Naive thymus-derived CD4-positive, alpha-beta T cell (primary cell): ENCODE measurements at regions of chr13 and their contacts with region 1.

Region 1: DNA sequence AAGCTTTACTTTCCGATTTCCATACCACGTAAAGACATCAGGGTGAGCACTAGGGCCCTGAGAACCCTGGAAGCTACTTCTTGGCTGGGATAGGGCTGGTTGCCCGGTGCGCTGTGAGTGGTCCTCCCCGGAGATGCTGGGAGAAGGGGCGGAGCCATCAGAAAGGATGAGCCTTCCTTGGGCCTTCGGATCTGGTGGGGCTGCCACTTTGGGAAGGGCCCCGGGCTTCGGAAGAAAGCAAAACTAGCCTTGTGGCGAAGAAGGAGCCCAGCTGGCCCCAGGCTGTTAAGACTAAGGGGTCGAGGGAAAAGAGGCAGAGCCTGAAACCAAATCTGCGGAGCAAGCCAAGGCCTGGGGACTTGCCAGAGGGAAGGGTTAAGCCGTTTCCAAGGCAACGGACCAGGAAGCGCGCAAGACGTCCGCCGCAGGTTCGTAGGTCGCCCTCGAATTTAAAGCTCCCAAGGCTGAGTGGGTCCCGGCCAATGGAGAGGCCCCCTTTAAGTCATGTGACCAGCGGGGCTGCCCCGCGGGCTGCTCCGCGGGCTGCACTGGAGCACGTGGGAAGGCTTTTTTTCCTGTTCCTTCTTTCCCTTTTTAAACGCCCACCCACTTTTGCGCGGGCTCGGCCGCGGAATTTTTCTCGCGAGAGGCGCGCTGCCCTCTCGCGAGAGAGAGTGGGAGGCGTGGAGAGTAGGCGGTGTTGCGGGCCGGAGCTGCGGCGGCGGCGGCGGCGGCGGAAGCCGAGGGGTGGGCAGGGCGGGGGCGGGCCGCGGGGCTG is 426 bp upstream of the AKAP11 start:
- DNase-seq: peak; percentile 87 to 96 (median 93)
- ATAC-seq: peak; percentile 93
- H3K4me3 ChIP-seq: peak overlapping the region; percentile 84
- H3K4me3 Mint-ChIP-seq: peak overlapping the region in 9 of 10 donors; percentile 84 to 98 (median 97)
- H3K27ac ChIP-seq: peak overlapping the region; percentile 93
- H3K27ac Mint-ChIP-seq: peak overlapping the region; percentile 75 to 98 (median 96)
- H3K4me1 ChIP-seq: peaks cover 21 to 22% of the 10 kb centered on the region in 2 donors
- H3K4me1 Mint-ChIP-seq: peaks cover 16 to 55% (median 47%) of the 10 kb centered on the region in 7 donors
- H3K27me3 ChIP-seq: no peaks in the 10 kb centered on the region
- H3K27me3 Mint-ChIP-seq: peaks cover 0 to 5% (median 0%) of the 10 kb centered on the region in 5 donors

Region 2: DNA sequence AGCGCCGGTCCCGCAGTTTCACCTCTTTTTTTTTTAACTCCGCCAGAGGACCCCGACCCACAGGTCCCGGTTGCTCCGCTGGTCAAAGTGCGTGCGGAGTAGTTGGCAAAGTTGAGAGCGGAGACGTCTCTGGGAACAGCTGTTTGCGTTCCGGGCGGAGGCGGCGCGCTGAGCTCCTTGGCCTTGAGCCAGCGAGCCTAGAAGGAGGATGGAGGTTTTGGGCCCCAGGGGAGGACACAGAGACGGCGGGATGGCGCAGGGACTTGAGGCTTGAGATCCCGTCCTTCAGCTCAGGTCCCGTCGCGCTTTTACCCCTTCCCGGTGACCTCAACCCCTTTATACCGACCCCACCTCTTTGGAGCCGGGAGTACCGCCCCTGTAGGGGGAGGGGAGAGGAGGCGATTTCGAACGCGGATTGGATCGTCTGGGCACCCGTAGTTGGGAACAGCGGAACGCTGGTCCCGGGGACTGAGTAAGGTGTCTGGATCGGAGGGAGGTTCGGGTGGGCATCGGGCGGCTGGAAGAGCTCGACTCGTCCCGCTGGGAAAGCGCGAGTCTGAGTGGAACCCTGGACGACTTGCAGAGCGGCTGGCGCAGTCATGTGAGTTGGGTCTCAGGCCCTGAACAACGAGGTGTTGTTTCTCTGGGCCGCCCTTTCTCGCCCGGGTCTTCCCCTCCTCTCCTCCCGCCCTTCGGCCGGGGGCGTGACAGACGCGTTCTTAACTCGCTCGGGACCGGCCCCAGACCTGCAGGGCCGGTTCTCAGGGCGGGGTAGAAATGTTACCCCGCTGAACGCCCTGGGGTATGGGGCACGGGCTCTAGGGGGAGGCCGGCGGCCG is 1210.2 kb before region 1 on chr13 and contains the start of gene WBP4:
- CTCF ChIA-PET with region 1: no interaction called
- POLR2A ChIA-PET with region 1: no interaction called
- intact Hi-C with region 1: loop called in 1 of 2 experiments (anchors 1 kb)
- DNase-seq: peak; percentile 81 to 94 (median 90)
- ATAC-seq: peak; percentile 78
- H3K4me3 ChIP-seq: peak within 1 kb of the TSS; percentile 74
- H3K4me3 Mint-ChIP-seq: peak within 1 kb of the TSS; percentile 97 to 100 (median 99)
- H3K27ac ChIP-seq: peak within 1 kb of the TSS; percentile 77
- H3K27ac Mint-ChIP-seq: peak within 1 kb of the TSS; percentile 95 to 100 (median 100)
- H3K4me1 ChIP-seq: peaks cover 0 to 5% of the 10 kb centered on the region in 2 donors
- H3K4me1 Mint-ChIP-seq: peaks cover 33 to 82% (median 59%) of the 10 kb centered on the region in 7 donors
- H3K27me3 ChIP-seq: no peaks in the 10 kb centered on the region
- H3K27me3 Mint-ChIP-seq: peaks cover 0 to 10% (median 0%) of the 10 kb centered on the region in 5 donors
- total RNA-seq, gene WBP4: 6.5 to 9.8 (median 8.6) TPM

Region 3: GRCh38 chr13:41310963-41311606 is 960.4 kb before region 1 on chr13 and contains the start of gene NAA16:
- CTCF ChIA-PET with region 1: no interaction called
- POLR2A ChIA-PET with region 1: no interaction called
- intact Hi-C with region 1: loop called in 1 of 2 experiments (anchors 2 kb)
- DNase-seq: peak; percentile 91 to 99 (median 94)
- ATAC-seq: peak; percentile 91
- H3K4me3 ChIP-seq: peak within 1 kb of the TSS; percentile 97
- H3K4me3 Mint-ChIP-seq: peak within 1 kb of the TSS; percentile 80 to 99 (median 98)
- H3K27ac ChIP-seq: peak within 1 kb of the TSS; percentile 91
- H3K27ac Mint-ChIP-seq: peak within 1 kb of the TSS; percentile 76 to 96 (median 95)
- H3K4me1 ChIP-seq: peaks cover 25 to 29% of the 10 kb centered on the region in 2 donors
- H3K4me1 Mint-ChIP-seq: peaks cover 14 to 55% (median 41%) of the 10 kb centered on the region in 7 donors
- H3K27me3 ChIP-seq: no peaks in the 10 kb centered on the region
- H3K27me3 Mint-ChIP-seq: no peaks in the 10 kb centered on the region
- total RNA-seq, gene NAA16: 30.6 to 99.6 (median 90.4) TPM

Region 4: DNA sequence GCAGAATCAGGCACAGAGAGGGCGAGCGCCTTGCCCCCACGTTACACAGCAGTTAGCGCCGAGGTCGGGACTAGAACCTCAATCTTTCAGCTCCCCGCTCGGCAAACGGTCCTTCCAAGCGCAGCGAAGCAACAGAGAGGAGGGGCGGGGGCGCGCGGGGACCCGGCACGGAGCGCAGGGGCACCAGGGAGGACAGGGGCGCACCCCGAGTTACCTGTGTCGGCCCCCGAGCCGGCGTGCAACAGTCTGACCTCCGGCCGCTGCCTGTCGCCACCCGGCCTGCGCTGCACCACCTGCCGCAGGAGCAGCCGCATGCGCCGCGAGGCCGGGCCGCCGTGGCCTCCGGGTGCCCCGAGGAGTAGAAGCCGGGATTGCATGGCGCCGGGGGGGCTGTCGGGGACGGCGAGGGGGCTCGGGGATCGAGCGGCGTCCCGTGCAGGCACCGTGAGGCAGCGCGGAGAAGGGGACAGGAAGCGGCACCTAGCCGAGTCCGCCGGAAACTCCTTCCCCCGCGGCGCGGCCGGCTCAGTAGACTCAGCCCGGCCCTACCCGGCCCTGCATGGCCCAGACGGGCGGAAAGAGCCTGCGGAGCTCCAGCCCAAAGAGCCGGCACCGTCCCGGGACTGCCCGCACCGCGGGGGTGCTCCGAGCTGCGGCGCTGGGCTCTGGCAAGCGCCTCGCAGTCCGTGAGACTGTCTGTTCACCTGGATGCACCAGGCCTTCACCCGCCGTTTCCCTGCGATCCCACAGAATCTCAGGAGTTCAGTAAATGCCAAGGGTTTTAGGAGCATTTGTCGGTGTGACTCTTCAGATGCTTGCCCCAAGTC is 310.7 kb before region 1 on chr13 and contains the start of gene VWA8:
- CTCF ChIA-PET with region 1: no interaction called
- POLR2A ChIA-PET with region 1: interaction called, 5 read pairs
- intact Hi-C with region 1: loop called (anchors 1 kb)
- DNase-seq: peak; percentile 75 to 86 (median 84)
- ATAC-seq: peak; percentile 97
- H3K4me3 ChIP-seq: peak within 1 kb of the TSS; percentile 86
- H3K4me3 Mint-ChIP-seq: peak within 1 kb of the TSS; percentile 92 to 97 (median 94)
- H3K27ac ChIP-seq: peak within 1 kb of the TSS; percentile 84
- H3K27ac Mint-ChIP-seq: peak within 1 kb of the TSS; percentile 88 to 99 (median 95)
- H3K4me1 ChIP-seq: peaks cover 14 to 16% of the 10 kb centered on the region in 2 donors
- H3K4me1 Mint-ChIP-seq: peaks cover 19 to 63% (median 43%) of the 10 kb centered on the region in 7 donors
- H3K27me3 ChIP-seq: no peaks in the 10 kb centered on the region
- H3K27me3 Mint-ChIP-seq: peaks cover 0 to 2% (median 0%) of the 10 kb centered on the region in 5 donors
- total RNA-seq, gene VWA8: 16.8 to 26.3 (median 21.8) TPM

Region 5: DNA sequence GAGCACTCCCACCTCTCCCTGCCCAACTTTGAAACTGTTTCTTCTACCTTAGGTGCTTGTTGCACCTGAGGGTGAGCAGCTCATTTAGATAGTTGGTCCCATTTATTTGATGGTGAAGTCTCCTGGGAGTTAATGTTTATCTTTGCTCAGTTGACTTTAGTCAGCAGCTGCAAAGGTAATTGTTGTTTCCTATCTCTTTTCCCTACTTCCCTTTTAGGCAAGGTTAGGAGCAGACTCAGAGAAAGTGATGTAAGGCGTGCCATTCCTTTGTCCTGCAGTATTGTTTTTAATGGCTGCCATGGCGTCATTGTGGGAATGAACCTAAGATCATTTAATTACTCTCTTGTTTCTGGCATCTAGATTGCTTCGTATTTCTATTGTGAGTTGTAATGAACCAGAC is 12.0 kb after region 1 on chr13:
- CTCF ChIA-PET with region 1: no interaction called
- POLR2A ChIA-PET with region 1: interaction called, 9 read pairs
- intact Hi-C with region 1: loop called in 1 of 2 experiments (anchors 2 kb)
- DNase-seq: no peak
- ATAC-seq: no peak
- H3K4me3 ChIP-seq: no peak overlapping the region
- H3K4me3 Mint-ChIP-seq: peak overlapping the region in 3 of 10 donors; percentile 13 to 46 (median 27)
- H3K27ac ChIP-seq: no peak overlapping the region
- H3K27ac Mint-ChIP-seq: no peak overlapping the region
- H3K4me1 ChIP-seq: peaks cover 6 to 8% of the 10 kb centered on the region in 2 donors
- H3K4me1 Mint-ChIP-seq: peaks cover 14 to 51% (median 48%) of the 10 kb centered on the region in 7 donors
- H3K27me3 ChIP-seq: no peaks in the 10 kb centered on the region
- H3K27me3 Mint-ChIP-seq: no peaks in the 10 kb centered on the region

Region 6: DNA sequence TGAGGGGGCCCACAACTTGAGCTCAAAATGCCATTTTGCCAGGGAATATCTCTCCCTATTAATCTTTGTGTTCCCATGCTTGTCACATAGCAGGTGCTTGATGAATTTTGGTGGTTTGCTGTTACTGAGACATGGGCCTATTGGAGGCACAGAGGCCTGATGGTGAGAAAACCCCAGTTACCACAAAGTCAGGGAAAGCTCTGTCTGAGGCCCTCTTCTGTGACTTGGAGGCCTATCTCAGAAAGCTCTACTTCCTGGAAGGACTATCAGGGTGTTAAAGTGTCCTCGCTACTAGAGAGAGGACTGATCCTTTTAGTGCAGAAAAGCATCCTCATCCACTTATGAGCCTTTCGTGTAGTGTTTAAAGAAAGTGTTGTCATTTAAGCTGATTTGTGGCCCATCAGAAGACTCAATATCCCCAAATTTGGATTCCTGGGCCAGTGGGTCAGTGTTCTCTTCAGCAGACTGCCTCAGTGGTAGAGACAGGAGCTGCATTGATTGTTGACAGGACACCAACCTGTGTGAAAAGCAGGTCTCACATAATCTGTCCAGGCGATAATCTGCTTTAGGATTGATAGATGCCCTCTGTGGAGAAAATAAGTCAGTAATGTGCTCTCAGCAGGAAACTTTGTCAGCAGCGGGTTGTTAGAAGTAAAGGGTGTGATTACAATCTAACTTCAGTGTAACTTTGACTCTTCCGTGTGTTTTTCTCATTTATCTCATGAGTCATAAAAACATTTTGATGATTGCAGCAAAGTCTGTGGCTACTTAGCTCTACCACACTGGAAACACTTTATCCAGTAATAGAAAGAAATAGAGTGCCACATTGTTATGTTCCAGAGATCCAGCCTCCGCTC is 121.4 kb after region 1 on chr13:
- CTCF ChIA-PET with region 1: no interaction called
- POLR2A ChIA-PET with region 1: no interaction called
- intact Hi-C with region 1: loop called (anchors 1 to 5 kb)
- DNase-seq: peak in 3 of 9 donors; percentile 13 to 51 (median 30)
- ATAC-seq: peak; percentile 68
- H3K4me3 ChIP-seq: no peak overlapping the region
- H3K4me3 Mint-ChIP-seq: peak overlapping the region; percentile 10 to 83 (median 68)
- H3K27ac ChIP-seq: no peak overlapping the region
- H3K27ac Mint-ChIP-seq: peak overlapping the region; percentile 2 to 98 (median 78)
- H3K4me1 ChIP-seq: peaks cover 47 to 68% of the 10 kb centered on the region in 2 donors
- H3K4me1 Mint-ChIP-seq: peaks cover 32 to 77% (median 73%) of the 10 kb centered on the region in 7 donors
- H3K27me3 ChIP-seq: no peaks in the 10 kb centered on the region
- H3K27me3 Mint-ChIP-seq: no peaks in the 10 kb centered on the region

Region 7: GRCh38 chr13:42574435-42575311 is 303.1 kb after region 1 on chr13:
- CTCF ChIA-PET with region 1: no interaction called
- POLR2A ChIA-PET with region 1: no interaction called
- intact Hi-C with region 1: no loop called
- DNase-seq: peak in 7 of 9 donors; percentile 15 to 66 (median 30)
- ATAC-seq: peak; percentile 68
- H3K4me3 ChIP-seq: peak overlapping the region; percentile 50
- H3K4me3 Mint-ChIP-seq: peak overlapping the region; percentile 78 to 97 (median 92)
- H3K27ac ChIP-seq: no peak overlapping the region
- H3K27ac Mint-ChIP-seq: peak overlapping the region in 6 of 9 donors; percentile 5 to 65 (median 32)
- H3K4me1 ChIP-seq: peaks cover 5 to 9% of the 10 kb centered on the region in 2 donors
- H3K4me1 Mint-ChIP-seq: peaks cover 10 to 38% (median 25%) of the 10 kb centered on the region in 7 donors
- H3K27me3 ChIP-seq: no peaks in the 10 kb centered on the region
- H3K27me3 Mint-ChIP-seq: peaks cover 16 to 60% (median 24%) of the 10 kb centered on the region in 5 donors

Region 8: GRCh38 chr13:44141725-44142539 is 1870.4 kb after region 1 on chr13:
- CTCF ChIA-PET with region 1: no interaction called
- POLR2A ChIA-PET with region 1: no interaction called
- intact Hi-C with region 1: loop called in 1 of 2 experiments (anchors 10 kb)
- DNase-seq: peak; percentile 81 to 99 (median 88)
- ATAC-seq: peak; percentile 99
- H3K4me3 ChIP-seq: peak overlapping the region; percentile 89
- H3K4me3 Mint-ChIP-seq: peak overlapping the region; percentile 84 to 97 (median 92)
- H3K27ac ChIP-seq: peak overlapping the region; percentile 82
- H3K27ac Mint-ChIP-seq: peak overlapping the region; percentile 76 to 98 (median 95)
- H3K4me1 ChIP-seq: peaks cover 5% of the 10 kb centered on the region in 2 donors
- H3K4me1 Mint-ChIP-seq: peaks cover 6 to 23% (median 17%) of the 10 kb centered on the region in 7 donors
- H3K27me3 ChIP-seq: peaks cover 0 to 3% of the 10 kb centered on the region in 2 donors
- H3K27me3 Mint-ChIP-seq: peaks cover 0 to 51% (median 7%) of the 10 kb centered on the region in 5 donors